ENCODE measurements at regions of chr5 and their contacts with region 1.

Region 1: GRCh38 chr5:160439205-160439600 is 17.5 kb downstream of the PTTG1 start:
- DNase-seq: peak; percentile 90 to 95
- ATAC-seq: peak; percentile 92
- H3K4me3 ChIP-seq: peak overlapping the region; percentile 2 to 21
- H3K27ac ChIP-seq: no peak overlapping the region
- H3K4me1 ChIP-seq: no peaks in the 10 kb centered on the region
- H3K27me3 ChIP-seq: no peaks in the 10 kb centered on the region

Region 2: DNA sequence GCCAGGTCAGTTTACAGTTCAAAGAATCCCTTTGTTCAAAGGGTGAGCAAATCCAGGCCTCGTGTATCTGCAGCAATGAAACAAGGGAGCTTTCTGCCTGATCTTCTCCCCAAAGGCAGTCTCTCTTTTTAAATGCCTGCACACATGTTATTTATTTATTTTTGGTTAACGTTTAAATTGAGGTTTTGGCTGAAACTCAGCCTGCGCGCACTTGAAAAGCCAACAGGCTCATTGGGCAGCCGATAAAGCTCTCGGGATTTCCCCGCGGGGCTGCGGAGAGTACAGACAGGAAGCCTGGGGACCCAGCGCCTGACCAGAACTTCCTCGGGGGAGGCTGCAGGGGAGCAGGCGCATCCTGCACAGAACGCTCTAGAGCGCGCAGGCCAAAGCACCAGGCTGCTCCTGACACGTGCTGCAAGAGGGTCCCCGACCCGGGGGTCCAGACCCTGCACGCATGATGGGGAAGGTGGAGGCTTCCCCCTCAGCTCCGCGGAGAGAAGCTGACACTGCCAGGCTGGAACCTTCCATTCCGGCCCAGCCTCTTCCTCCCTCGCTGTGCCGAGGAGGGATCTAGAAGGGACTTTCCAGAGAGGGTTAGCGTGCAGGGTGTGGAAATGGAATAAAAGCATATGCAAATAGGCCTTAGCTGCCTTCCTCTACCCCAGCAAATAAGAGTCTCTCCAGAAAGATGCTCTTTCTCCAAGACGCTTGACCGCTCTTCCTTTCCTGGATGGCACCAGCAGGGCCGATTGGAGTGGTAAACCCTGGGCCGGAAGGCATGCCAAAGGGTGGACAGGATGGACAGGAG is 28.6 kb after region 1 on chr5:
- intact Hi-C with region 1: no loop called
- DNase-seq: peak; percentile 82 to 89
- ATAC-seq: peak; percentile 69
- H3K4me3 ChIP-seq: no peak overlapping the region
- H3K27ac ChIP-seq: no peak overlapping the region
- H3K4me1 ChIP-seq: peaks cover 3 to 6% of the 10 kb centered on the region in 2 donors
- H3K27me3 ChIP-seq: no peaks in the 10 kb centered on the region

Region 3: DNA sequence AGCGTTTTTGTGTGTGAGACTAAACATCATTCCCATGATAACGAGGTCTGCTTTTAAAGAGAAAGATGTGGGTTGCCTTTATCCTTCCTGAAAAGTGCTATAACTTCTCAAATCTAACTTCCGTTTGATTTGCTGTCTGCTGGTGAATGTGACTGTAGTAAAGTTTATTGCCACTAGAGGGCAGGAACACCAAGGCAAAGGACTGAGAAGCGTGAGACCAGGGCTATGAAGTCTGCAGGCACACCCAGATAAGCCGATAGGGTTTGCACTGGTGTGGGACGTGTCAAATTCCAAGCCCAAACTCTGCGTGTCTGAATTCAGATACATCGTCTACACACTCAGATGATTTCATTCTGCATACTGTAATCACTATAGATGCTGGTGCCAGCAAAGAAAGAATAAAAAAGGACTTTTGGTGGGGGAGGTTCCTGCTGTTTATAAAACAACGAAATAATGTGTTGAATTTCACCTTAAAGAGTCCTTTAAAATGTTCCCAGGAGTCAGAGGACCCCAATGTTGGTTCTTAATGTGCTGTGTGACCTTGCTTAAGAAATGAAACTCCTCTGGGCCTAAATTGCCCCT is 69.7 kb after region 1 on chr5:
- intact Hi-C with region 1: loop called in 1 of 2 experiments (anchors 2 kb)
- DNase-seq: no peak
- ATAC-seq: peak; percentile 87
- H3K4me3 ChIP-seq: no peak overlapping the region
- H3K27ac ChIP-seq: no peak overlapping the region
- H3K4me1 ChIP-seq: no peaks in the 10 kb centered on the region
- H3K27me3 ChIP-seq: peaks cover 0 to 2% of the 10 kb centered on the region in 2 donors

Measured in aorta (tissue), 5 donors.